HepG2 (cell line): ENCODE measurements at regions of chr2 and their contacts with region 1.

Region 1: GRCh38 chr2:39008665-39009064 is 112.2 kb downstream of the SOS1 start:
- DNase-seq: no peak
- ATAC-seq: no peak
- H3K4me3 ChIP-seq: no peak overlapping the region
- H3K27ac ChIP-seq: no peak overlapping the region
- H3K4me1 ChIP-seq: no peaks in the 10 kb centered on the region; the same call in 1 of the 2 replicates
- H3K27me3 ChIP-seq: no peaks in the 10 kb centered on the region
- CTCF ChIP-seq: no peak
- EP300 ChIP-seq: no peak
- POLR2A ChIP-seq: no peak
- RAD21 ChIP-seq: no peak

Region 2: GRCh38 chr2:39033980-39034379 is 25.3 kb after region 1 on chr2:
- CTCF ChIA-PET with region 1: no interaction called
- POLR2A ChIA-PET with region 1: no interaction called
- in situ Hi-C with region 1: no loop called
- intact Hi-C with region 1: loop called (anchors 1 kb)
- DNase-seq: no peak
- ATAC-seq: no peak
- H3K4me3 ChIP-seq: no peak overlapping the region
- H3K27ac ChIP-seq: no peak overlapping the region
- H3K4me1 ChIP-seq: no peaks in the 10 kb centered on the region
- H3K27me3 ChIP-seq: no peaks in the 10 kb centered on the region
- CTCF ChIP-seq: no peak
- EP300 ChIP-seq: no peak
- POLR2A ChIP-seq: no peak
- RAD21 ChIP-seq: no peak

Region 3: GRCh38 chr2:39124000-39124745 is 115.5 kb after region 1 on chr2:
- CTCF ChIA-PET with region 1: no interaction called
- POLR2A ChIA-PET with region 1: no interaction called
- in situ Hi-C with region 1: no loop called
- intact Hi-C with region 1: no loop called
- DNase-seq: peak; percentile 97
- ATAC-seq: peak; percentile 79
- H3K4me3 ChIP-seq: peak overlapping the region; percentile 81 to 82 (median 81)
- H3K27ac ChIP-seq: peak overlapping the region; percentile 93
- H3K4me1 ChIP-seq: peaks cover 47% of the 10 kb centered on the region
- H3K27me3 ChIP-seq: no peaks in the 10 kb centered on the region; a peak in 1 of 5 replicates
- CTCF ChIP-seq: peak; percentile 93
- EP300 ChIP-seq: peak; percentile 43 to 78; a peak in 2 of 4 replicates
- POLR2A ChIP-seq: peak; percentile 85 to 90
- RAD21 ChIP-seq: peak; percentile 72

Region 4: DNA sequence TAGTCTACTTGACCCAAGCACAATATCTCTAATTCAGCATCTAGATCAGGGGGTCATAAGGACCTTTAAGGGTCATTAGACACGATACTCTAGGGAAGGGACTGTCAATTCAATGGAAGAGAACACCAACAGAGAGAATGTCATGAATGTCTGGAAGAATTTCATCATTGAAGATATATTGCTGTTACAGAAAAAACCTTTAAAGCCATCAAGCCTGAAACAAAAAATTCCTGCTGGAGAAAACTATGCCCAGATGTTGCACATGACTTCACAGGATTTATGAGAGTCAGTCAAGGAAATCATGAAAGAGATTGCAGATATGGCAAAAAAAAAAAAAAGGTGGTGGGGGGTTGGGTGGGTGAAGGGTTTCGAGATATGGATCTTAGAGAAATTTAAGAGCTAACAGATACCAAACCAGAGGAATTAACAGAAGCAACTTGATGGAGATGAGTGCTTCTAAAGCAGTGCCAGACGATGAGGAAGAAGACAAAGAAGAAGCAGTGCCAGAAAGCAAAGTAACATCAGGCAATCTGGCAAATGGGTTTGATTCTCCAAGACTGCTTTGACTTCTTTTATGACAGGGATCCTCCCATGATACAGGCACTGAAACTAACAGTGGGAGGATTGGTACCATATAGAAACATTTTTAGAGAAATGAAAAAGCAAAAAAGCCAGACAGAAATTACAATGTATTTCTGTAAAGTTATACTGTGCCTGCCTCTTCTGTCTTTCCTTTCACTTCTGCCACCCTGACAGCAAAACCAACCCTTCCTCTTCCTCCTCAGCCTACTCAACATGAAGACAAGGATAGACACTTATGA is 399.9 kb after region 1 on chr2:
- CTCF ChIA-PET with region 1: no interaction called
- POLR2A ChIA-PET with region 1: no interaction called
- in situ Hi-C with region 1: no loop called
- intact Hi-C with region 1: no loop called
- DNase-seq: no peak
- ATAC-seq: no peak
- H3K4me3 ChIP-seq: no peak overlapping the region
- H3K27ac ChIP-seq: peak overlapping the region; percentile 4
- H3K4me1 ChIP-seq: peaks cover 87% of the 10 kb centered on the region
- H3K27me3 ChIP-seq: no peaks in the 10 kb centered on the region
- CTCF ChIP-seq: no peak
- EP300 ChIP-seq: no peak
- POLR2A ChIP-seq: no peak
- RAD21 ChIP-seq: no peak